ENCODE measurements at regions of chr6 and their contacts with region 1.

Region 1: GRCh38 chr6:30396833-30397479 is 52.0 kb downstream of the RPP21 start:
- DNase-seq: peak; percentile 79
- H3K4me3 ChIP-seq: no peak overlapping the region
- H3K27ac ChIP-seq: no peak overlapping the region
- H3K4me1 ChIP-seq: no peaks in the 10 kb centered on the region
- CTCF ChIP-seq: peak; percentile 95

Region 2: GRCh38 chr6:30102970-30103874 is 293.7 kb before region 1 on chr6:
- CTCF ChIA-PET with region 1: no interaction called
- POLR2A ChIA-PET with region 1: no interaction called
- intact Hi-C with region 1: loop called (anchors 1 kb)
- DNase-seq: peak; percentile 81
- H3K4me3 ChIP-seq: no peak overlapping the region
- H3K27ac ChIP-seq: no peak overlapping the region
- H3K4me1 ChIP-seq: peaks cover 16% of the 10 kb centered on the region
- CTCF ChIP-seq: peak; percentile 87

Region 3: DNA sequence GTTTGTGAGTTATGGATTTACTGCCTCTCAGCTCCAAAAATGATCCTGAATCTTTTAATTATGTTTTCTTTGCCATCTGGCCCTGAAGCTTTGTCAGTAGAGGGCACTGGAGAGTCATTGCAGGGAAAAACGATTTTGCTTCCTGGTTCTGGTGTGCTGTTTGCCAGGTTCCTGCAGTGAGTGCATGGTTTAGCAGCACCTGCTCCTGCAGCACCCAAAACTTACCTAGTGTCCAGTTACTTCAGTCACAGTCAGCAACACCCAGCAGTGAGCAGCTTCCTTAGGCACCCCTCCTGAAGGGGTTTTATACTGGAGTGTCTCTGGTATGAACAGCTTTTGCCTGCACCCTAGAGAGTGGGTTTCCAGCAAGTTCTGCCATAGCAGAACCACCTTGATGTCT is 177.7 kb before region 1 on chr6:
- CTCF ChIA-PET with region 1: no interaction called
- POLR2A ChIA-PET with region 1: interaction called, 3 read pairs
- intact Hi-C with region 1: loop called (anchors 1 kb)
- DNase-seq: peak; percentile 85
- H3K4me3 ChIP-seq: no peak overlapping the region
- H3K27ac ChIP-seq: no peak overlapping the region
- H3K4me1 ChIP-seq: peaks cover 39% of the 10 kb centered on the region
- CTCF ChIP-seq: peak; percentile 96

Region 4: GRCh38 chr6:30238174-30238795 is 158.7 kb before region 1 on chr6:
- CTCF ChIA-PET with region 1: interaction called, 4 read pairs
- POLR2A ChIA-PET with region 1: no interaction called
- intact Hi-C with region 1: loop called (anchors 1 kb)
- DNase-seq: peak; percentile 61
- H3K4me3 ChIP-seq: no peak overlapping the region
- H3K27ac ChIP-seq: no peak overlapping the region
- H3K4me1 ChIP-seq: no peaks in the 10 kb centered on the region
- CTCF ChIP-seq: peak; percentile 76

Region 5: GRCh38 chr6:30357678-30358540 is 39.0 kb before region 1 on chr6:
- CTCF ChIA-PET with region 1: no interaction called
- POLR2A ChIA-PET with region 1: interaction called, 3 read pairs
- intact Hi-C with region 1: loop called (anchors 1 kb)
- DNase-seq: peak; percentile 55
- H3K4me3 ChIP-seq: no peak overlapping the region
- H3K27ac ChIP-seq: no peak overlapping the region
- H3K4me1 ChIP-seq: no peaks in the 10 kb centered on the region
- CTCF ChIP-seq: peak; percentile 87

Region 6: DNA sequence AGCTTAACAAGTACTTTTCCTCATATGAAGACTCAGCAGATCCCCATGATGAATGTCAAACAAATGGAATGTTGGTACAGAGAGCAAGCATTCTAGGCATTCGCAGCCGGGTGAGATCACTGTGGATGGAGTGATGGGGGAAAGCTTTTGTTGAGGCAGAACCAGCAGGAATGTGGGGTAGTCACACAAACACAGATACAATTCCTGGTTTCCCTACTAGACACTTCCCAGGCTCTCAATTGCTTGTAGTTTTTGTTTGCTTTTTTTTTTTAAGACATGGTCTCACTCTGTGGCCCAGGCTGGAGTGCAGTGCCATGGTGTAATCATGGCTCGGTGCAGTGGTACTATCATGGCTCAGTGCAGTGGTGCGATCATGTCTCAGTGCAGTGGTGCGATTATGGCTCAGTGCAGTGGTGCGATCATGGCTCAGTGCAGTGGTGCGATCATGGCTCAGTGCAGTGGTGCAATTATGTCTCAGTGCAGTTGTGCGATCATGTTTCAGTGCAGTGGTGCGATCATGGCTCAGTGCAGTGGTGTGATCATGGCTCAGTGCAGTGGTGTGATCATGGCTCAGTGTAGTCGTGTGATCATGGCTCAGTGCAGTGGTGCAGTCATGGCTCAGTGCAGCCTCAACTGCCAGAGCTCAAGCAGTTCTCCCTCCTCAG is 362.8 kb after region 1 on chr6:
- CTCF ChIA-PET with region 1: no interaction called
- POLR2A ChIA-PET with region 1: no interaction called
- intact Hi-C with region 1: loop called (anchors 5 kb)
- DNase-seq: no peak
- H3K4me3 ChIP-seq: no peak overlapping the region
- H3K27ac ChIP-seq: no peak overlapping the region
- H3K4me1 ChIP-seq: peaks cover 8% of the 10 kb centered on the region
- CTCF ChIP-seq: no peak

Measured in OCI-LY7 (cell line).